Activated T-helper 1 cell treated with anti-CD3 and anti-CD28 coated beads, Interleukin-12 subunit alpha, Interleukin-12 subunit beta, Interleukin-2, Interleukin-4 antibody, amounts not matched to agents 30 ng/mL and 10 ng/mL and 1 ng/mL, durations not matched to agents 14 hours and 24 hours and 36 hours (primary cell): ENCODE measurements at regions of chr3 and their contacts with region 1.

Region 1: DNA sequence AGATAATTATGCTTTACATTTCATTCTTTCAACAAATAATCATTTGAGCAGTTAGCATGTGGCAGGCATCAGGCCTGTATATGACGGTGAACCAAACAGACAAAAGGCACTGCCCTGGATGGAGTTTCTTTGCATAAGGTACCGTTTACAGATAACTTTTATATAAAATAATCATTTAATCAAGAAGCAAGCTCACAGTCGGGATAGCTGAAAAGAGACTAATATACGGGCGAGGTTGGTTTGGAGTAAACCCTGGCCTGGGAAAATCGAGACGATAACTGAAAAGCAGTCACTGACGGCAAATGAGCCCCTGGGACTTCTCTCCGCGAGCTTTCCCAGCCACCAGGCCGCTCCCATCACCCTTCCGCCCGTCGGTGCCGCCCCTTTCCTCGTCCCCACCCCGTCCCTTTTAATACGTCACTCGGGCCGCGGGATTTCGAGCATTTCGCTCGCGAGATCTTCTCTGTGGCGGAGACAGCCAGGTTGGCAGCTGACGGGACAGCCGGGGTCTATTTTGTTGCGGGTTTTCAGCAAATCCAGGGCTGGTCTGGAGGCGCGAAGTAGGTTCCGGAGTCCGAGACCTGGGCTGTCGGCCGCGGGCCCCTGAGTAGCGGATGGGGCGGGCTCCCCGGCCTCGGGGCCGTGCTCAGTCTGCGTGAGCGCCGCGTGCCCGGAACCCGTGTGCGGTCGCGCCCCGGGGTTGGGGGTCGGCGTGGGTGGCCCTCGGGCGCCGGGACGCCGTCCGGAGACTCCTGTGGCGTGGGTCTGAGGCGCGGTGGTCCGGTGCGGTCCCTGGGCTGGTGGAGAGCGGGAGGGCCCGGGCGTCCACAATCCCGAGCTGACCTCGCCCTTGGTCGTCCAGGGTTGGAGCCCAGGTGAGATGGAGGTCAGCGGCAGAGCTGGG is at the start of gene NMD3:
- DNase-seq: peak; percentile 88
- H3K4me3 Mint-ChIP-seq: peak within 1 kb of the TSS; percentile 94
- H3K27ac Mint-ChIP-seq: peak within 1 kb of the TSS; percentile 93
- H3K4me1 Mint-ChIP-seq: peaks cover 31% of the 10 kb centered on the region
- H3K27me3 Mint-ChIP-seq: peaks cover 10% of the 10 kb centered on the region
- total RNA-seq, gene NMD3: 74.5 and 79.6 TPM in 2 replicates

Region 2: GRCh38 chr3:160399125-160400029 is 821.7 kb before region 1 on chr3 and contains the starts of genes IFT80 and SMC4:
- intact Hi-C with region 1: loop called (anchors 1 kb)
- DNase-seq: peak; percentile 93
- H3K4me3 Mint-ChIP-seq: peak within 1 kb of the TSS; percentile 96
- H3K27ac Mint-ChIP-seq: peak within 1 kb of the TSS; percentile 98
- H3K4me1 Mint-ChIP-seq: peaks cover 57% of the 10 kb centered on the region
- H3K27me3 Mint-ChIP-seq: peaks cover 6% of the 10 kb centered on the region
- total RNA-seq, gene IFT80: 14.0 and 14.8 TPM in 2 replicates
- total RNA-seq, gene SMC4: 163 and 164 TPM in 2 replicates

Region 3: DNA sequence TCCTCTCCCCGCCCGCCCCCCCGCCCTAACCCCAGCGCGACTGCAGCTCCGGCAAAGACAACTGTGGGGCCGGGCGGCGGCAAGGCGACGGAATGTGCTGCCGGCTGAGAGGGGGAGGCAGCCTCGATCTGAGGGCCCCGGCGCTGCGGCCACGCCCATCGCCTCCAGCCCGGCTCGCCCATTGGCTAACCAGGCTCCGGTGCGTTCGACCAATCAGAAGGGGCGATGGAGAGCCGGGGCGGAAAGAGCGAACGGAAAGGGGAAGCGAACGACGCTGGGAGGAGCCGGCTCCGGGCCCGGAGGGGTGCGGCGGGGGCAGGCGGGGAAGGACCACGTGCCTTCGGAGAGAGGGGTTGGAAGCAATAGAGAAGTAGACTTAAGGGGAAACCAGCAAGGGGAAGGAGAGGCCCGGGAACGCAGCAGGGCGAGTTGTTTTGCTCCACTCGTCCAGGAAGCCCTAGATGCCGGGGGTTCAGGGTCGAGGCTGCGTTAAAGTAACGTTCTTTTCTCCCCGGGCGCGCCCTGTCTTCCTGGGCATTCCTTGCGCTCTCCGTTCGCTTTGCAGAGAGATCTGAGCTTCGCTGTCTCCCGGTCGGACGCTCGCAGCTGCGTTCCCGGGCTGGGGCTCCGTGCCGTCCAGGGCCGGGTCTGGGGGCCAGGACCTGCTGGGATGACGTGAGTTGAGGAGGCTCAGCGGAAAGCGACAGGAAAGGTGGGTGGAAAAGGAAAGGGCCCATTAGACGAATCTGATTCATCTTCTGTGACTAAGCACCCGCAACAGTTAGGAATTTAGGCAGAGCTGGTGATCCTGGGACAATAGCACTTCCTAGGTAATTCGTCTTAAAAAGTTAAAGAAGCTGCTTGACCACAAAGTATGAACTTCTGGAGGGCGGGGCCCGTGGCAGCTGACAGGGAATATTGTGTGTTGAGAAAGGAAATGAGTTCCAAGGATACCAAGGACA is 655.4 kb before region 1 on chr3 and contains the start of gene KPNA4:
- intact Hi-C with region 1: loop called (anchors 1 kb)
- DNase-seq: peak; percentile 96
- H3K4me3 Mint-ChIP-seq: peak within 1 kb of the TSS; percentile 97
- H3K27ac Mint-ChIP-seq: peak within 1 kb of the TSS; percentile 96
- H3K4me1 Mint-ChIP-seq: peaks cover 58% of the 10 kb centered on the region
- H3K27me3 Mint-ChIP-seq: no peaks in the 10 kb centered on the region
- total RNA-seq, gene KPNA4: 73.5 and 77.7 TPM in 2 replicates

Region 4: DNA sequence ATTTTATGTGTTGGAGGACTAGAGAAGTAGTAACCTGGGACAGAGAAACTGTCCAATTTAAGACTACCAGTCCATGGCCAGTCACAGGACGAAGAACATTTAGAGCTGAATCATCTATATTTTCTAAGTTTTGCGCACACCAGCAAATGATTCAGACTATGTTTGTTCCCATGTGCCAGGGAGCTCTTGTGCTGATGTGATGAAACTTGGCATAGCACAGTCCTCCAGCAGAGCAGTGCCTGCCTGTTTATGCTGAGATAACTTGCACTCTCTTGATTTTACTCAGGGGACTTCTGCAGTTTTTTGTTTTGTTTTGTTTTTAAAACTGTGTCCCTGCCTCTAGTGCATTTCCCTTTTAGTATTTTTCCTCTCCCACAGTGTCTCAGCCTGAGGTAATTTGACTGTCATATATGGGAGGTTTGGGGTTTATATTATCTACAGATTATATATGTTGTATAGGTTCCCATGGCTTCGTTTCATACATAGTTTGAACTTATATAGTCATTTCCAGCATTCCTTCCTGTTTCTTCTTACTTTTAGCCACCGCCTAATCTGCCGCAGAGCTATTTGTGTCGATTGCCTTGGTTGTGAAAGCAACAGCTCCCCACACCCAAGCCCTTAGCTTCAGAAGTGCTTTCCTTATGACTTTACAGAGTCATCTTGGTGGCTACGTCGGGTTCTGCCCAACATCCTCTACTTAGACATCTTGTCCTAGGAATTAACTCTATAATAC is 419.6 kb before region 1 on chr3:
- intact Hi-C with region 1: loop called (anchors 1 kb)
- DNase-seq: peak; percentile 70
- H3K4me3 Mint-ChIP-seq: peak overlapping the region; percentile 64
- H3K27ac Mint-ChIP-seq: peak overlapping the region; percentile 85
- H3K4me1 Mint-ChIP-seq: peaks cover 36% of the 10 kb centered on the region
- H3K27me3 Mint-ChIP-seq: peaks cover 12% of the 10 kb centered on the region

Region 5: DNA sequence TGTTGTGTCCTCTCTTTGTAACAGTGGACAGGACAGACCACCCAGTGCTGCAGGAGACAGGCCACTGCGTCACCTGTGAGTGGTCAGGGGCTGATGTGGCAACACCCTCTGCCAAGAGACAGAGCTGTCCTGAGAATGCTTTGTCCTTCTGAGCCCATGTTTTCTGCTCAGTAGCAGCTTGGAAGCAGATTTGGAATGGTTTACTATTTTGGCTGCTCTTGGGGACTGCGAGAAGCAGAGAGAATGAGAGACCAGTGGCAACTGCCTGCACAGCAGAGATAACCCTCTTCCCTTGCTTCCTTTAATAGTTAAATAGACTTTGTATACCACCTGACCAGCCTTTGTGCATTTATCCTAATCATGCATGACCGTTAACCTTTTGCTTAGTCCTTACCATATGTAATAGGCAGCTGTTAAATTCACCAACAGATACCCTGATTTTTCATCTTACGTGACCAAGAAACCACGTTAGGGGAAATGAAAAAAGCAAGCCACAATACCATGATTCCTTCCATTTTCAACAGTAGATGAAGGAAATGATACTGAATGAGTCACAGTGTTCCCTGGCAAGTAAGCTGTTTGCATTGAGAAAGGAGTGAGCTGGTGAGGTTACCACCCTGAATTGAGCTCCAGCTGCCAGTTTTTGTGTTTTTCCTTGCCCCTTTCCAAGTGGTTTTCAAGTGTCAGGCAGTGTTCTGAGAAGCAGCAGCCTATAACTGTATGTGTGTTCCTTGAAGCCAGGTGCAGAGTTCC is 151.4 kb before region 1 on chr3:
- intact Hi-C with region 1: loop called (anchors 5 kb)
- DNase-seq: no peak
- H3K4me3 Mint-ChIP-seq: no peak overlapping the region
- H3K27ac Mint-ChIP-seq: no peak overlapping the region
- H3K4me1 Mint-ChIP-seq: peaks cover 48% of the 10 kb centered on the region
- H3K27me3 Mint-ChIP-seq: no peaks in the 10 kb centered on the region

Region 6: DNA sequence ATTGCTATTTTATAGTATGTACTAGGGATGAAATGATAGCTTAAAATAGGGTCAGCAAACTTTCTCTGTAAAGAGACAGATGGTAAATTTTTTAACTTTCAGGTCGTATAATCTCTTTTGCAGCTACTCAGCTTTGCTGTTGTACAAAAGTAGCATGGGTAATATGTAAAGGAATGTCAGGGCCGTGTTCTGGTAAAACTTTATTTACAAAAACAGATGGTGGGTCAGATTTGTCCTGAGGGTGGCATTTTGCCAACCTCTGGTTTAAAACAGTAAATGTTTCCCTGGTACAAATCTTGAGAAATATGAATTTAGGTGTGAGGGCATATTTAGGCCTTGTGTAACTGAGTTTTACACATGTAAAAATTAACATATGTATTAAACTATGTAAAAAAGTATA is 18.6 kb after region 1 on chr3:
- intact Hi-C with region 1: loop called (anchors 2 kb)
- DNase-seq: no peak
- H3K4me3 Mint-ChIP-seq: no peak overlapping the region
- H3K27ac Mint-ChIP-seq: no peak overlapping the region
- H3K4me1 Mint-ChIP-seq: peaks cover 9% of the 10 kb centered on the region
- H3K27me3 Mint-ChIP-seq: no peaks in the 10 kb centered on the region

Region 7: DNA sequence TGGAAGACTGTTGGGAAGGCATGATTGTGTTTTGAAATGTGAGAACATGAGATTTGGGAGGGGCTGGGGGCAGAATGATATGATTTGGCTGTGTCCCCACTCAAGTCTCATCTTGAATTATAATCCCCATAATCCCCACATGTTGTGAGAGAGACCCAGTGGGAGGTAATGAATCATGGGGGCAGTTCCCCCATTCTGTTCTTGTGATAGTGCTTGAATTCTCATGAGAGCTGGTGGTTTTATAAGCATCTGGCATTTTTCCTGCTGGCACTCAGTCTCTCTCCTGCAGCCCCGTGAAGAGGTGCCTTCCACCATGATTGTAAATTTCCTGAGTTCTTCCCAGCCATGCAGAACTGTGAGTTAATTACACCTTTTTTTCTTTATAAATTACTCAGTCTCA is 706.0 kb after region 1 on chr3:
- intact Hi-C with region 1: no loop called
- DNase-seq: no peak
- H3K4me3 Mint-ChIP-seq: no peak overlapping the region
- H3K27ac Mint-ChIP-seq: no peak overlapping the region
- H3K4me1 Mint-ChIP-seq: no peaks in the 10 kb centered on the region
- H3K27me3 Mint-ChIP-seq: no peaks in the 10 kb centered on the region